Activated B cell treated with CpG ODN at 0.5 μM for 24 hours (primary cell): ENCODE measurements at regions of chr14 and their contacts with region 1.

Region 1: DNA sequence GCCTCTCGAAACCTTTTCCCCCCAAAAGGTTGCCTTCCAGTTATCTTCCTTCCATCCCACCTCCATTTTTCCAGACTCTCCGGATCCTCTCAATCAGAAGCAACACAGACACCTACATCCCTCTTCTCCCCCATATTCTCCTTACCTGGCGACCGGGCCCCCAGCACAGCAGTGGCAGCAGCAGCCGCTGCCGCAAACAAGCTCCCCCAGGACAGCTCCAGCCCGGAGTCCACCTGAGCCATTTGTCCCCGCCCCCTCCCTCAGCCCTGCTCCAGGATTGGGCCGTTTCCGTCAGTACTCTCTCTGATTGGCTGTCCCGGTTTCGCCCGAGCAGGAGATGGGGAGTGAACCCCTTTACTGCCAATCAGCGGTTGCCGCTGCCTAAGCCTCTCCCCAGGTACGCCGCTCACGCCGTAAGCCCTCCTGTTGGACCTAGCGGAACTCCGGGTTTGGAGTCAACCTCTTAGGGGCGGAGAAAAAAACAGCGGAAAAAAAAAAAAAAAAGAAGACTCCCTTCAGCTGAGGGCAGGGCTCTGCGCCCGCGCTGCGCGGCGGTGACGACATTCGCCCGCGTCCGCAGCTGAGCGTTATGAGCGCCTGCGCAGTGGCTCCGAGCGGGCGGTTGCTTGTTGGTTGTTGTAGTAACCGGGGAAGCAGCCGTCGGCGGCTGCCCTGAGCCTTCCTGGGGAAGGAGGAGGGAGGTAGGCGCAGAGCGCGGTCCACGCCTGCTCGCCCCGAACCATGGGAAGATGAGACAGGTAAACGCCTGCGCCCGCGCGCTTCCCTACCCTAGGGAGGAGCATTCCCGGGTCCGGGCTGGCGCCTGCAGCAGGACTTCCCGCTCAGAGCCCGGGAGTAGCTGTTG is at the starts of genes ERG28 and TTLL5:
- DNase-seq: peak; percentile 94
- ATAC-seq: peak; percentile 92
- H3K4me3 Mint-ChIP-seq: peak within 1 kb of the TSS; percentile 99
- H3K27ac Mint-ChIP-seq: peak within 1 kb of the TSS; percentile 97
- H3K4me1 Mint-ChIP-seq: peaks cover 25% of the 10 kb centered on the region
- H3K27me3 Mint-ChIP-seq: no peaks in the 10 kb centered on the region
- CTCF ChIP-seq: no peak
- total RNA-seq, gene ERG28: 28.4 and 30.7 TPM in 2 replicates
- total RNA-seq, gene TTLL5: 37.9 and 39.1 TPM in 2 replicates

Region 2: GRCh38 chr14:74493343-74494261 is 1167.3 kb before region 1 on chr14 and contains the start of gene ISCA2:
- CTCF ChIA-PET with region 1: no interaction called
- POLR2A ChIA-PET with region 1: no interaction called
- intact Hi-C with region 1: loop called (anchors 5 kb)
- DNase-seq: peak; percentile 98
- ATAC-seq: peak; percentile 90
- H3K4me3 Mint-ChIP-seq: no peak within 1 kb of the TSS
- H3K27ac Mint-ChIP-seq: no peak within 1 kb of the TSS
- H3K4me1 Mint-ChIP-seq: peaks cover 34% of the 10 kb centered on the region
- H3K27me3 Mint-ChIP-seq: no peaks in the 10 kb centered on the region
- CTCF ChIP-seq: no peak
- total RNA-seq, gene ISCA2: 35.0 and 35.3 TPM in 2 replicates

Region 3: GRCh38 chr14:74881431-74882361 is 779.2 kb before region 1 on chr14 and contains the start of gene DLST:
- CTCF ChIA-PET with region 1: no interaction called
- POLR2A ChIA-PET with region 1: no interaction called
- intact Hi-C with region 1: loop called (anchors 1 kb)
- DNase-seq: peak; percentile 88
- ATAC-seq: peak; percentile 86
- H3K4me3 Mint-ChIP-seq: peak within 1 kb of the TSS; percentile 99
- H3K27ac Mint-ChIP-seq: peak within 1 kb of the TSS; percentile 97
- H3K4me1 Mint-ChIP-seq: peaks cover 51% of the 10 kb centered on the region
- H3K27me3 Mint-ChIP-seq: no peaks in the 10 kb centered on the region
- CTCF ChIP-seq: no peak
- total RNA-seq, gene DLST: 73.1 and 90.4 TPM in 2 replicates

Region 4: GRCh38 chr14:75176142-75176820 is 484.6 kb before region 1 on chr14 and contains the start of gene TMED10:
- CTCF ChIA-PET with region 1: no interaction called
- POLR2A ChIA-PET with region 1: interaction called, 3 read pairs
- intact Hi-C with region 1: loop called (anchors 1 kb)
- DNase-seq: peak; percentile 79
- ATAC-seq: peak; percentile 73
- H3K4me3 Mint-ChIP-seq: peak within 1 kb of the TSS; percentile 97
- H3K27ac Mint-ChIP-seq: peak within 1 kb of the TSS; percentile 99
- H3K4me1 Mint-ChIP-seq: peaks cover 32% of the 10 kb centered on the region
- H3K27me3 Mint-ChIP-seq: no peaks in the 10 kb centered on the region
- CTCF ChIP-seq: no peak
- total RNA-seq, gene TMED10: 124 and 130 TPM in 2 replicates

Region 5: GRCh38 chr14:75361751-75362433 is 299.0 kb before region 1 on chr14:
- CTCF ChIA-PET with region 1: no interaction called
- POLR2A ChIA-PET with region 1: no interaction called
- intact Hi-C with region 1: no loop called
- DNase-seq: no peak
- ATAC-seq: no peak
- H3K4me3 Mint-ChIP-seq: no peak overlapping the region
- H3K27ac Mint-ChIP-seq: no peak overlapping the region
- H3K4me1 Mint-ChIP-seq: no peaks in the 10 kb centered on the region
- H3K27me3 Mint-ChIP-seq: peaks cover 3% of the 10 kb centered on the region
- CTCF ChIP-seq: no peak

Region 6: GRCh38 chr14:75514673-75515628 is 145.9 kb before region 1 on chr14:
- CTCF ChIA-PET with region 1: interaction called, 4 read pairs
- POLR2A ChIA-PET with region 1: interaction called, 11 read pairs
- intact Hi-C with region 1: loop called (anchors 1 kb)
- DNase-seq: peak; percentile 61
- ATAC-seq: peak; percentile 56
- H3K4me3 Mint-ChIP-seq: peak overlapping the region; percentile 87
- H3K27ac Mint-ChIP-seq: peak overlapping the region; percentile 99
- H3K4me1 Mint-ChIP-seq: peaks cover 69% of the 10 kb centered on the region
- H3K27me3 Mint-ChIP-seq: no peaks in the 10 kb centered on the region
- CTCF ChIP-seq: no peak

Region 7: DNA sequence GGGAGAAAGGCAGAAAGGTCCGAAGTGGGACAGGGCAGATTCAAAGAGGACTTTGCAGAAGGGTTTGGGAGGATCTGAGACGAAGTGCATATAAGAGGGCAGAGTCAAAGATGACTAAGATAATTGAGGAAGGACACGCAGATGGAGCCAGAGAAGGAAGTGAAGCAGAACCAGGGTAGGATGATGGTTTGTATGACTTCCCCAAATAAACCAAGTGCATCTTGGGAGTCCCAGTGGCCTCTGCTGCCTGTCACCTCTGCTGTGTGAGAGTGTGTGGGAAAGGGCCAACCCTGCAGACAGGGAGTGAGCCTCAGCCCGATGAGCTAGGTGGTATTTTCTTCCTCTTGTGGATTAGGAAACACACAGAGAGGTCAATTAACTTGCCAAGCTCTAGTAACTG is 45.7 kb before region 1 on chr14:
- CTCF ChIA-PET with region 1: no interaction called
- POLR2A ChIA-PET with region 1: interaction called, 6 read pairs
- intact Hi-C with region 1: loop called (anchors 2 kb)
- DNase-seq: no peak
- ATAC-seq: peak; percentile 95
- H3K4me3 Mint-ChIP-seq: no peak overlapping the region
- H3K27ac Mint-ChIP-seq: peak overlapping the region; percentile 50
- H3K4me1 Mint-ChIP-seq: peaks cover 15% of the 10 kb centered on the region
- H3K27me3 Mint-ChIP-seq: no peaks in the 10 kb centered on the region
- CTCF ChIP-seq: no peak

Region 8: DNA sequence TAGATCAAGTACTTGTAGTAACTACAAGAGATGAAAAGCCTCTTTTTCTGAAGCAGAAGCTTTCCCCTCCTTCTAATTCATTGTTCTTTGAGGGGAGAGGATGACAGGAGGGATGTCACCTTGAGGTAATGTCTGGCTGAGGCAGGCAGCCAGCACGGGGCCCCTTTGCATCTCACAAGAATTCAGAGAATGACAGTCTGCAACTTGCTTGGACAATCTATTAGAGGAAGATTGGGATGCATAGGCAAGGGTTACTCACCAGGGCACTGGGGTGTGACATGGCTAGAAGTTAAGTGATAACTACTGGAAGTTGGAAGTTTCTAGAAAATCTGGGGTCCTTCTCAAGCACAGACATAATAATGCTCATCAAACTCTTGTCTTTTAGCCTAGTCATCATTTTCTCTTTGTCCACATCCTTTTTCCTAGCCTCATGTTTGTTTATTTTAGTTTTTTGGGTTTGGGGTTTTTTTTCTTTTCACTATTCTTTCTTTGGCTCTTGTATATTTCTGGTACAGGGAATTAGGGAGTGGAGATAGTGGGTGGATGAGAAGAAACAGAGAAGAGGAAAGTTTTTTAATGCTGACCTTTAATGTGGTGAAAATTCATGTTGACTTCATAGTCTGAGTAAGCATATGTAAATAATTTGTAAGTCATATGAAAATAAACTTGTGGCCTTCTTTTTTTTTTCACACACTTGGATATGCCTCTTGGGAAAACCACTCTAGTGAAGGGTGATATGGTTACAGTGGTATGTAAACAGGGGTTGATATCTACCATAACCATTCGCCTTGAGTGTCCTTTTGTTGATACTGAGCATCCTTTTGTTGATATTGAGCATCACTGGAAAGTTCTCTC is 55.3 kb after region 1 on chr14:
- CTCF ChIA-PET with region 1: no interaction called
- POLR2A ChIA-PET with region 1: no interaction called
- intact Hi-C with region 1: no loop called
- DNase-seq: no peak
- ATAC-seq: no peak
- H3K4me3 Mint-ChIP-seq: no peak overlapping the region
- H3K27ac Mint-ChIP-seq: no peak overlapping the region
- H3K4me1 Mint-ChIP-seq: no peaks in the 10 kb centered on the region
- H3K27me3 Mint-ChIP-seq: no peaks in the 10 kb centered on the region
- CTCF ChIP-seq: no peak

Region 9: DNA sequence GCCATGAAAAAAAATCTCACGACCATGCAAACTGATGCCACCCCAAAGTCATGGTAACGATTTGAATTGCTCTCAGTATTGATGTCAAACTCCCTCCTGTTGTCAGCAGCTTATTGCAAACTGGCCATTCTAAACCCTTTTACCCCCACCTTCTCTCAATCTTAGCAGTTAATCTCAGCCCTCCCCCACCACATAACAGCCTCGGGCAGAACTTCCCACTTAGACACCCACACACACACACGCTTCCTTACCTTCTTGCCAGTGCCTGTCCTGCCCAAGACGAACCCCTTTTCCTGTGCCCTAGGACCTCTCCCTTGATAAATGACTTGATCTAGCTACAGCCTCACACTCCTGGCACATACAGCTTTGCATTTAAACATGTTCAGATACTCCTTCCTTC is 547.5 kb after region 1 on chr14:
- CTCF ChIA-PET with region 1: no interaction called
- POLR2A ChIA-PET with region 1: no interaction called
- intact Hi-C with region 1: no loop called
- DNase-seq: no peak
- ATAC-seq: no peak
- H3K4me3 Mint-ChIP-seq: no peak overlapping the region
- H3K27ac Mint-ChIP-seq: no peak overlapping the region
- H3K4me1 Mint-ChIP-seq: peaks cover 4% of the 10 kb centered on the region
- H3K27me3 Mint-ChIP-seq: no peaks in the 10 kb centered on the region
- CTCF ChIP-seq: no peak

Region 10: GRCh38 chr14:76812211-76813044 is 1151.6 kb after region 1 on chr14 and contains the start of gene ANGEL1:
- CTCF ChIA-PET with region 1: no interaction called
- POLR2A ChIA-PET with region 1: no interaction called
- intact Hi-C with region 1: loop called (anchors 2 kb)
- DNase-seq: peak; percentile 97
- ATAC-seq: peak; percentile 95
- H3K4me3 Mint-ChIP-seq: peak within 1 kb of the TSS; percentile 95
- H3K27ac Mint-ChIP-seq: peak within 1 kb of the TSS; percentile 91
- H3K4me1 Mint-ChIP-seq: peaks cover 25% of the 10 kb centered on the region
- H3K27me3 Mint-ChIP-seq: no peaks in the 10 kb centered on the region
- CTCF ChIP-seq: no peak
- total RNA-seq, gene ANGEL1: 14.9 and 17.9 TPM in 2 replicates